ENCODE measurements at regions of chr1 and their contacts with region 1.

Region 1: GRCh38 chr1:37859507-37860345 is at the start of gene MTF1:
- DNase-seq: peak; percentile 96 to 100
- H3K4me3 ChIP-seq: peak within 1 kb of the TSS; percentile 94
- CTCF ChIP-seq: peak in 1 of 3 donors; percentile 71
- POLR2A ChIP-seq: no peak
- total RNA-seq, gene MTF1: 6.7 to 9.6 (median 7.7) TPM

Region 2: GRCh38 chr1:37692078-37692833 is 167.5 kb before region 1 on chr1 and contains the start of gene CDCA8:
- intact Hi-C with region 1: loop called (anchors 5 kb)
- DNase-seq: peak; percentile 98 to 100
- H3K4me3 ChIP-seq: peak within 1 kb of the TSS; percentile 73
- CTCF ChIP-seq: no peak
- POLR2A ChIP-seq: no peak
- total RNA-seq, gene CDCA8: 1.0 to 3.2 (median 1.8) TPM

Region 3: GRCh38 chr1:37875834-37876233 is 16.1 kb after region 1 on chr1:
- intact Hi-C with region 1: no loop called
- DNase-seq: no peak
- H3K4me3 ChIP-seq: no peak overlapping the region
- CTCF ChIP-seq: no peak
- POLR2A ChIP-seq: no peak

Measured in lower leg skin (tissue), 4 donors.